ENCODE measurements at regions of chr5 and their contacts with region 1.

Region 1: DNA sequence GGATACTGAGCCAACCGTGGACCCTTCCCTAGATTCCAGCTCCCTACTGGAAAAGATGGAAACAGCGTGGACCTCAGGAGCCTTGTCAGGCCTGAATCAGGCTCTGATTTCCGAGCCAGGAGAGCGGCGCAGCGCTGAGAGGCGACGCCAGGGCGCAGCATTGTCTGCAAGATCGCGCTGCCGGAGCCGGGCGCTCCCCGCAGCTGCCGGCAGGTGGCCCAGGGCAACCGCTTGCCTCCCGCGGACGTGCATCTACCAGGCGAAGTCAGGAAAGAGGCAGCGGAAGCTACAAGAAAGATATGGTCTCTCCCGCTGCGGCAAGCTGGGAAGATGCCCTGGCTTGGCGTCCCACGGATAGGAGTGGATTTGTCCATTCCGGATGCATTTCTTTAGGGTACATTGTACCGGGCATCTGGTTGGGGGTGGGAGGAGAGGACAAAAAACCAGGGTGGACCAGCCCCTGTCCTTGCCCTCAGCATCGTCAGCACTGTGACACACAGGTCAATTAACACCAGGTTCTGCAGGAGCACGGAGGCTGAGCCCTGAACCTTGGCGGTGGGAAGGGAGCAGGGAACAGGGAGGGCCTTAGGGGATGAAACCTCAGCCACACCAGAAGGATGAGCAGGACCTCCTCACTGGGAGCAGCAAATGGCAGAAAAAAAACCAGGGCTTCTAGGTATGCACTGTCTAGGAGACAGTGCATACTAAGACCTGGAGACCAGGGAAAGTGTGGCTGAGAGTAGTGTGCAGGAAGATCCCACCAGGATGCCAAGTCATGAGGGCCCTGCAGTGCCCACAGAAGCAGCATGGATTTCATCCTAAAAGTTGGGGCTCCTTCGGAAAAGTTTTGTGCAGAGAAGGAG is 55.9 kb downstream of the SFXN1 start:
- DNase-seq: peak; percentile 89
- ATAC-seq: peak; percentile 99
- H3K4me3 Mint-ChIP-seq: peak overlapping the region; percentile 9
- H3K27ac Mint-ChIP-seq: no peak overlapping the region
- H3K4me1 Mint-ChIP-seq: peaks cover 52% of the 10 kb centered on the region
- H3K27me3 Mint-ChIP-seq: no peaks in the 10 kb centered on the region

Region 2: GRCh38 chr5:175159956-175160355 is 374.3 kb before region 1 on chr5:
- CTCF ChIA-PET with region 1: no interaction called
- POLR2A ChIA-PET with region 1: no interaction called
- DNase-seq: no peak
- ATAC-seq: no peak
- H3K4me3 Mint-ChIP-seq: no peak overlapping the region
- H3K27ac Mint-ChIP-seq: no peak overlapping the region
- H3K4me1 Mint-ChIP-seq: no peaks in the 10 kb centered on the region
- H3K27me3 Mint-ChIP-seq: no peaks in the 10 kb centered on the region

Region 3: DNA sequence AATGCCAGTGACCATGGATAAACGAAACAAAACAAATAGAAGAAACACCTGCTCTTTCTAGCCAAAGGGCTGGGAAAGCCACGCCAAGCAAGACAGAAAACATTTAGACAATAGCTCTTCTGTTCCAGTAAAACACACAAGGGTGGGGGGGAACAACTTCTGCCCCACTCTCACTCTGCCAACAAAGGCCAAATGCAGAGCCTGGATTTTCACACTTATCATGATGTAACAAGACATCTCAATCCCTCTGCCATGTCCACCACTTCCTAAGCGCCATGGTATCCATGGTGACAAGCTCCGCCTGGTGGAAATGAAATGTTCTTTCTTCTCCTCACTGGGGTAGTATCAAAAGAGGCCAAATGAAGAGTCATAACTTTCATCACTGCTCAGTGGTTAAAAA is 151.0 kb before region 1 on chr5:
- CTCF ChIA-PET with region 1: no interaction called
- POLR2A ChIA-PET with region 1: no interaction called
- DNase-seq: no peak
- ATAC-seq: no peak
- H3K4me3 Mint-ChIP-seq: no peak overlapping the region
- H3K27ac Mint-ChIP-seq: no peak overlapping the region
- H3K4me1 Mint-ChIP-seq: no peaks in the 10 kb centered on the region
- H3K27me3 Mint-ChIP-seq: peaks cover 12% of the 10 kb centered on the region

Region 4: DNA sequence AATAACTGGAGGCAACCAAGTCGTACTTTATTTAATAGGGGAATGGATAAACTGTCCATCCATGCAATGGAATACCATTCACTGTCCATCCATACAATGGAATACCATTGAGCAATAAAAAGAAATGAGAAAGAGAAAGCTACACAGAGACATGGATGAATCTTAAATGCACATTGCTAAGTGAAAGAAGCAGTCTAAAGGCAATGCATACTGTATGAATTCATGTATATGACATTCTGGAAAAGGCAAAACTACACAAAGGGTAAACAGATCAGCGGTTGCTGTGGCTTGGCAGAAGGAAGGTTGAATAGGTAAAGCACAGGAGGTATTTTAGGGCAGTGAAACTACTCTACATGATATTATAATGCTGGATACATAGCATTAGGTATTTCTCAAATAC is 106.5 kb before region 1 on chr5:
- CTCF ChIA-PET with region 1: no interaction called
- POLR2A ChIA-PET with region 1: no interaction called
- DNase-seq: no peak
- ATAC-seq: no peak
- H3K4me3 Mint-ChIP-seq: no peak overlapping the region
- H3K27ac Mint-ChIP-seq: no peak overlapping the region
- H3K4me1 Mint-ChIP-seq: no peaks in the 10 kb centered on the region
- H3K27me3 Mint-ChIP-seq: peaks cover 19% of the 10 kb centered on the region

Region 5: GRCh38 chr5:175464074-175464941 is 70.0 kb before region 1 on chr5:
- CTCF ChIA-PET with region 1: interaction called, 11 read pairs
- POLR2A ChIA-PET with region 1: no interaction called
- DNase-seq: peak; percentile 84
- ATAC-seq: peak; percentile 98
- H3K4me3 Mint-ChIP-seq: no peak overlapping the region
- H3K27ac Mint-ChIP-seq: peak overlapping the region; percentile 67
- H3K4me1 Mint-ChIP-seq: peaks cover 13% of the 10 kb centered on the region
- H3K27me3 Mint-ChIP-seq: peaks cover 8% of the 10 kb centered on the region

Region 6: DNA sequence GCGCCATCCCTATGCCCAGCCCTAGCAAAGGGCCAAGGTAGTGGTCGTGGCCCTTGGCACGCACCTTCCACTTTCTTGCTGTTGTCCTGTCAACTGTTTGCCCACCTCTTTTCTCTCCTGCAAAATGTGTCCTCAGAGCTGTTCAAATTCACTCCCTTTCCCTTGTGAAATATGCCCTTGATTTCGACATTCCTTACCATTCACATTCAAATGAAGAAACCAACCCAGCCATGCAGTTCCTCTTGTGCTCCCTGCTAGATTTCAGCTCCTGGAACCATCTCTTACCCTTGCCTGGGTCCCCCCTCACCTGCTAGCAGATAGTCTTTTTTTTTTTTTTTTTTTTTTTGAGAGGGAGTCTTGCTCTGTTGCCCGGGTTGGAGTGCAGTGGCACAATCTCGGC is 104.0 kb after region 1 on chr5:
- CTCF ChIA-PET with region 1: no interaction called
- POLR2A ChIA-PET with region 1: no interaction called
- DNase-seq: no peak
- ATAC-seq: no peak
- H3K4me3 Mint-ChIP-seq: no peak overlapping the region
- H3K27ac Mint-ChIP-seq: no peak overlapping the region
- H3K4me1 Mint-ChIP-seq: peaks cover 24% of the 10 kb centered on the region
- H3K27me3 Mint-ChIP-seq: peaks cover 7% of the 10 kb centered on the region

Region 7: GRCh38 chr5:175649967-175650366 is 115.7 kb after region 1 on chr5:
- CTCF ChIA-PET with region 1: interaction called, 28 read pairs
- POLR2A ChIA-PET with region 1: interaction called, 3 read pairs
- DNase-seq: no peak
- ATAC-seq: no peak
- H3K4me3 Mint-ChIP-seq: no peak overlapping the region
- H3K27ac Mint-ChIP-seq: no peak overlapping the region
- H3K4me1 Mint-ChIP-seq: peaks cover 46% of the 10 kb centered on the region
- H3K27me3 Mint-ChIP-seq: no peaks in the 10 kb centered on the region

Region 8: GRCh38 chr5:175681045-175681967 is 147.0 kb after region 1 on chr5:
- CTCF ChIA-PET with region 1: interaction called, 30 read pairs
- POLR2A ChIA-PET with region 1: interaction called, 3 read pairs
- DNase-seq: no peak
- ATAC-seq: no peak
- H3K4me3 Mint-ChIP-seq: no peak overlapping the region
- H3K27ac Mint-ChIP-seq: no peak overlapping the region
- H3K4me1 Mint-ChIP-seq: peaks cover 55% of the 10 kb centered on the region
- H3K27me3 Mint-ChIP-seq: no peaks in the 10 kb centered on the region

Region 9: GRCh38 chr5:175709276-175709781 is 175.0 kb after region 1 on chr5:
- CTCF ChIA-PET with region 1: interaction called, 109 read pairs
- POLR2A ChIA-PET with region 1: no interaction called
- DNase-seq: no peak
- ATAC-seq: no peak
- H3K4me3 Mint-ChIP-seq: no peak overlapping the region
- H3K27ac Mint-ChIP-seq: no peak overlapping the region
- H3K4me1 Mint-ChIP-seq: no peaks in the 10 kb centered on the region
- H3K27me3 Mint-ChIP-seq: no peaks in the 10 kb centered on the region

Region 10: GRCh38 chr5:175796536-175797499 is 262.5 kb after region 1 on chr5:
- CTCF ChIA-PET with region 1: interaction called, 12 read pairs
- POLR2A ChIA-PET with region 1: no interaction called
- DNase-seq: peak; percentile 88
- ATAC-seq: peak; percentile 99
- H3K4me3 Mint-ChIP-seq: no peak overlapping the region
- H3K27ac Mint-ChIP-seq: no peak overlapping the region
- H3K4me1 Mint-ChIP-seq: peaks cover 5% of the 10 kb centered on the region
- H3K27me3 Mint-ChIP-seq: peaks cover 39% of the 10 kb centered on the region

Measured in activated CD8-positive, alpha-beta T cell treated with anti-CD3 and anti-CD28 coated beads, Interleukin-2, amount 10 ng/mL, durations not matched to agents 7 days and 5 days (primary cell).